Caco-2 (cell line): ENCODE measurements at regions of chr11 and their contacts with region 1.

Region 1: GRCh38 chr11:4187055-4187988 is 92.7 kb downstream of the RRM1 start:
- DNase-seq: peak; percentile 71 to 93
- H3K4me3 ChIP-seq: peak overlapping the region; percentile 46
- H3K4me3 Mint-ChIP-seq: peak overlapping the region; percentile 74
- H3K27ac Mint-ChIP-seq: no peak overlapping the region
- H3K4me1 ChIP-seq: no peaks in the 10 kb centered on the region; the same call in 1 of the 2 replicates
- H3K4me1 Mint-ChIP-seq: no peaks in the 10 kb centered on the region
- H3K27me3 ChIP-seq: no peaks in the 10 kb centered on the region
- H3K27me3 Mint-ChIP-seq: no peaks in the 10 kb centered on the region
- CTCF ChIP-seq: peak; percentile 94 to 96

Region 2: GRCh38 chr11:4493480-4493818 is 306.1 kb after region 1 on chr11:
- CTCF ChIA-PET with region 1: interaction called, 46 read pairs
- POLR2A ChIA-PET with region 1: no interaction called
- intact Hi-C with region 1: loop called (anchors 1 kb)
- DNase-seq: no peak
- H3K4me3 ChIP-seq: no peak overlapping the region
- H3K4me3 Mint-ChIP-seq: no peak overlapping the region
- H3K27ac Mint-ChIP-seq: no peak overlapping the region
- H3K4me1 ChIP-seq: no peaks in the 10 kb centered on the region
- H3K4me1 Mint-ChIP-seq: peaks cover 14% of the 10 kb centered on the region
- H3K27me3 ChIP-seq: no peaks in the 10 kb centered on the region
- H3K27me3 Mint-ChIP-seq: peaks cover 13% of the 10 kb centered on the region
- CTCF ChIP-seq: no peak

Region 3: DNA sequence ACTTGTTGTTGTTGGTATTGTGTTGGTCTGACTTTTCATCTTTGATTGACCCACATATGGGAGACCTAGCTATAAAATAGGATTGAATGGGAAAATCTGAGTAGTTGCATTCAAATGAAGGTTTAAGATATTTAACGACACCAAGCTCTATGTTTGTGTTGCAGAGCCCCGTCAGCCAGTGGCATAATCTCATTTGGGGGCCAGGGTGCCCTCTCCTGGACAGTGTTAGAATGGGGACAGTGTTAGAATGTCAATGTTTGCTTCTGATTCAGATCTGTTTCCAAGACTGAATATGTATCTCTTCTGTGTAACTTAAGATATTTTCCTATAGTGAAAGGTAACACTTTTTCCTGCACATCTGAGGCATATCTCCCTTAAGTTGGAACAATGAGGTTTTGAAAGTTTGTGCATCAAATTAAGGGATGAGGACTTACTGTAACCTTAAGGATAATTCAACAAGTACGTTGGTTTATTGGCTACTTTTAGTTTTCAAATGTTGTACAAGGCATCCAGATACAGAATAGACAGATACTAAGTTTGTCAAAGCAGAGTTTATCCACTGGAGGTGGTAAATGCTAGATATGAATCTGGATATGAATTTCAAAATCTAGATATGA is 352.4 kb after region 1 on chr11:
- CTCF ChIA-PET with region 1: interaction called, 60 read pairs
- POLR2A ChIA-PET with region 1: no interaction called
- intact Hi-C with region 1: loop called (anchors 1 kb)
- DNase-seq: peak in 1 of 2 experiments; percentile 59
- H3K4me3 ChIP-seq: no peak overlapping the region
- H3K4me3 Mint-ChIP-seq: no peak overlapping the region
- H3K27ac Mint-ChIP-seq: no peak overlapping the region
- H3K4me1 ChIP-seq: no peaks in the 10 kb centered on the region
- H3K4me1 Mint-ChIP-seq: no peaks in the 10 kb centered on the region
- H3K27me3 ChIP-seq: peaks cover 2% of the 10 kb centered on the region
- H3K27me3 Mint-ChIP-seq: peaks cover 3% of the 10 kb centered on the region
- CTCF ChIP-seq: peak; percentile 71 to 83

Region 4: DNA sequence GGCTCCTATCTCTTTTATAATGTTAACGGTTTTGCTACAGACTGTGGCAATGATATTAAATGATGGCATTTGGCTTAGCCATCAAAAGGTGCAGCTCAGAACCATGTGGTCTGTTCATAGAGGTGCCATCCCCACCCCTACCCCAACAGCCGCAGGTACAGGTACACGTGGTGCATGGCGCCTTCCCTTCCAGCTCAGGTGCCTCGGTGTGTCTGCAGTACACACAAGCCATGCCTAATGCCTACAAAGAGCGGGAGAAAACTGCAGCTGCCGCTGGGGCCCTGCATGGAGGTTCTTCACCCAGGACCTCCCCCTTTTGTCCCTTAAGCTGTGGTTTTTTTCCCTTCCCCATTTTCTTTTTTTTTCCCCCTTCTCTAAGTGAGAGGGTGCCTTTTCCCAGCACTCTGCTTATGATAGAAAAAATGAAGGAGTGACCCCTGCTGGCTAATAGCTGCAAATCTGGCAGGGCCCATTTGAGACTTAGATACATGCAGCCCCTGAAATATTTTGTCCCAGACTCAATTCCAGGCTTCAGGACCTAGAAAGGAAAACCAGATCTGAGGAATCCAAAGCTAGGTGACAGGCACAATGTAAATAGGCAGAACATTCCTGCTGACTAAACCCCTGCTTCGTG is 364.1 kb after region 1 on chr11:
- CTCF ChIA-PET with region 1: interaction called, 5 read pairs
- POLR2A ChIA-PET with region 1: no interaction called
- intact Hi-C with region 1: loop called (anchors 1 kb)
- DNase-seq: no peak
- H3K4me3 ChIP-seq: no peak overlapping the region
- H3K4me3 Mint-ChIP-seq: no peak overlapping the region
- H3K27ac Mint-ChIP-seq: no peak overlapping the region
- H3K4me1 ChIP-seq: peaks cover 15% of the 10 kb centered on the region
- H3K4me1 Mint-ChIP-seq: no peaks in the 10 kb centered on the region
- H3K27me3 ChIP-seq: no peaks in the 10 kb centered on the region
- H3K27me3 Mint-ChIP-seq: no peaks in the 10 kb centered on the region
- CTCF ChIP-seq: peak; percentile 25 to 36

Region 5: DNA sequence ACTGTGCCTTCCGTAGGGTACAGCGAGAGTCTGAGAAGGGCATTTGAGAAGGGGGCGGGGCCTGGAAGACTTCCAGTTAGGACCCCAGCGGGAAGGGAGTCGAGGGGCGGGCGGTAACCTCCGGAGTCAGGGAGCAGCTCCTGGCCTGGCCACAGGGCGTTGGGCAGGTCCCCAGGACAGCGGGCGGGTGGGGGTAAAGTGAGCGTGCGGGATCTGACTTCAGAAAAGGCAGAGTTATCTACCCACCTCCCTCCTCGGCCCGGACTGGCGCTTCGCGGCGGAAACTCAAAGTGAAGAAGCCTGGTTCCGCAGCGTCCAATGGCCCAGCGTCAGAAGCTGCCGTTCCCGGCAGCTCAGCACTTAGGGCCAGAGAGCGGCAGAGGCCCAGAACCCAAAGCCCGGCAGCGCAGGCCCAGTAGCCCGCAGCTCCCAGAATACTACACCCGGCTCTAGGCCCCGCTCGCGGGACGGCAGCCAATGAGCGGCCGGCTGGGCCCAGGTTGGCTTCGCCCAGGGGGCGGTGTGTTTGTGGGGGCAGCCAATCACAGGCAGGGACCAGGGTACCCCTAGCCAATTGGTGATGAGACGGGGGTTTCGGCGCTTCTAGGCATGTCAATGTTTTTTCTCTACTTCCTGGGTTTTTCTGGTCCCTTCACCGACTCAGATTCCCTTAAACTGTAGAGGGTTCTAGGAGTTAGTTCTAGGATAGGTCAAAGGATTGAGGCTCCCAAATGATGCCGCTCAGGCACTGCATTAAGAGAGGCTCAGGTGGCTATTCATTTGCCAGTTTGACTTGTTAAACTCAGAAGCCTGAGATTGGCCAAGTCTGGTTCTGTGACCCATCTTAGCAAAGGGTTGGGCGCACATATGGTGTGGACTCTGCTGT is 420.7 kb after region 1 on chr11 and contains the start of gene TRIM68:
- CTCF ChIA-PET with region 1: interaction called, 10 read pairs
- POLR2A ChIA-PET with region 1: no interaction called
- intact Hi-C with region 1: no loop called
- DNase-seq: peak; percentile 97 to 98
- H3K4me3 ChIP-seq: peak within 1 kb of the TSS; percentile 50
- H3K4me3 Mint-ChIP-seq: peak within 1 kb of the TSS; percentile 87
- H3K27ac Mint-ChIP-seq: peak within 1 kb of the TSS; percentile 88
- H3K4me1 ChIP-seq: 0 out of 2 replicates have a peak, but pooled peaks cover 13% of the 10 kb centered on the region
- H3K4me1 Mint-ChIP-seq: peaks cover 10% of the 10 kb centered on the region
- H3K27me3 ChIP-seq: no peaks in the 10 kb centered on the region
- H3K27me3 Mint-ChIP-seq: no peaks in the 10 kb centered on the region
- CTCF ChIP-seq: no peak
- total RNA-seq, gene TRIM68: 4.9 and 6.9 TPM in 2 replicates

Region 6: GRCh38 chr11:4626207-4627099 is 439.1 kb after region 1 on chr11:
- CTCF ChIA-PET with region 1: no interaction called
- POLR2A ChIA-PET with region 1: no interaction called
- intact Hi-C with region 1: loop called (anchors 5 kb)
- DNase-seq: peak; percentile 73 to 83
- H3K4me3 ChIP-seq: no peak overlapping the region
- H3K4me3 Mint-ChIP-seq: no peak overlapping the region
- H3K27ac Mint-ChIP-seq: no peak overlapping the region
- H3K4me1 ChIP-seq: no peaks in the 10 kb centered on the region
- H3K4me1 Mint-ChIP-seq: peaks cover 6% of the 10 kb centered on the region
- H3K27me3 ChIP-seq: no peaks in the 10 kb centered on the region; the same call in 1 of the 2 replicates
- H3K27me3 Mint-ChIP-seq: peaks cover 13% of the 10 kb centered on the region
- CTCF ChIP-seq: peak; percentile 73 to 79